Endothelial cell of umbilical vein (primary cell): ENCODE measurements at regions of chr1 and their contacts with region 1.

Region 1: DNA sequence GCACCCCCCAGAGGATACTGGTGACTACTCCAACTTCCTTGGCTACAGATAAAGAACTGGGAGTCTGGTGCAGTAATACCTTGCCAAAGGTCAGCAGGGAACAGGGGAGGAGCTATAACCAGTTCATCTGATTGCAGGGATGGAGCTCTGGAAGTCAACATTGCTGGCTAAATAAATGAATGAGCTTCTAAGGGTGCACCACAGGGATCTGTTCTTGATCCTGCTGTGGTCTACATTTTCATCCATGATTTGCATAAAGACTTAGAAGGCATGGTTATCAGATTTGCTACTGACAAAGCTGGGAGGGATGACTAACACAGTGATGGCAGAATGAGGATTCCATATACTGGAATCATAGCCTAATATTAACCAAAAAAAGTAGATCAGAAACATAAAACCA is 18.3 kb downstream of the PLEKHA6 start:
- DNase-seq: no peak
- H3K4me3 ChIP-seq: no peak overlapping the region
- H3K27ac ChIP-seq: no peak overlapping the region
- H3K4me1 ChIP-seq: peaks cover 11% of the 10 kb centered on the region
- H3K27me3 ChIP-seq: no peaks in the 10 kb centered on the region
- CTCF ChIP-seq: no peak
- POLR2A ChIP-seq: no peak

Region 2: GRCh38 chr1:204313675-204314074 is 27.7 kb before region 1 on chr1:
- CTCF ChIA-PET with region 1: no interaction called
- POLR2A ChIA-PET with region 1: no interaction called
- dilution Hi-C with region 1: no loop called
- intact Hi-C with region 1: loop called (anchors 1 kb)
- DNase-seq: peak; percentile 62
- H3K4me3 ChIP-seq: no peak overlapping the region
- H3K27ac ChIP-seq: no peak overlapping the region
- H3K4me1 ChIP-seq: peaks cover 13% of the 10 kb centered on the region
- H3K27me3 ChIP-seq: no peaks in the 10 kb centered on the region
- CTCF ChIP-seq: no peak
- POLR2A ChIP-seq: no peak

Region 3: GRCh38 chr1:204714861-204715511 is 373.6 kb after region 1 on chr1:
- CTCF ChIA-PET with region 1: no interaction called
- POLR2A ChIA-PET with region 1: no interaction called
- dilution Hi-C with region 1: no loop called
- intact Hi-C with region 1: no loop called
- DNase-seq: no peak
- H3K4me3 ChIP-seq: no peak overlapping the region
- H3K27ac ChIP-seq: no peak overlapping the region
- H3K4me1 ChIP-seq: no peaks in the 10 kb centered on the region
- H3K27me3 ChIP-seq: peaks cover 36 to 45% of the 10 kb centered on the region in 2 experiments
- CTCF ChIP-seq: no peak
- POLR2A ChIP-seq: no peak